Natural killer cell (primary cell): ENCODE measurements at regions of chr4 and their contacts with region 1.

Region 1: DNA sequence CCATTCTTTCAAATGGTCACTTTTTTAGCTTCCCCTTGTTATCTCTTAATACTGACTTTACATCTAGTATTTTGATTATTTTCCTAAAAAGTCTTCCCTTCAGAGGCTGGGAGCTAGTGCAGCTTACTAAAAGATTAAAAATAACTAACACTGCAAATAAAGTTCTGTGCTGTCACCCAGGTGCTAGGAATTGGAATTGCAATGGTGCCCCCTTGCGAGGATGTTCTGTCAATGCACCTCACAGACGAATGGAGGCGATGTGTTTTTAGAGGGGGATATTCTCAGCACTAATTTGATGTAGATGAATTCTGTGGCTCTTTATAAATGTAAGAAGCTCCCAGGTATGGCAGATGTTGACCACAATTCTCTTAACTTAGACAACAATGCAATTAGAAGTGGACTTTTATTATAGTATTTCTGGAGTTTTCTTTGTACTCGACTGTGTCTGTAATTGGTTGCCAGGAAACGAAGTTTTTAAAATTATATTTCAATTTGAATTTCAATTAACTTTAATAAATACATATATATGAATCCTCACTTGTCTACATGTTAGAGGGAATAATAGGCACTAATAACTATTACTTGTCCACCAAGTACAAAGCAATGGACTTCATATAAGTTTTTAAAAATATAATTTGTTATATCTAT is 22.0 kb upstream of the SMIM31 start:
- DNase-seq: peak; percentile 43 to 68
- ATAC-seq: peak; percentile 65 to 75 (median 73)
- H3K4me3 ChIP-seq: no peak overlapping the region
- H3K4me3 Mint-ChIP-seq: no peak overlapping the region
- H3K27ac ChIP-seq: no peak overlapping the region
- H3K27ac Mint-ChIP-seq: no peak overlapping the region
- H3K4me1 ChIP-seq: no peaks in the 10 kb centered on the region
- H3K4me1 Mint-ChIP-seq: peaks cover 8 to 40% of the 10 kb centered on the region in 2 donors
- H3K27me3 ChIP-seq: no peaks in the 10 kb centered on the region
- H3K27me3 Mint-ChIP-seq: peaks cover 0 to 5% of the 10 kb centered on the region in 2 donors
- CTCF ChIP-seq: peak; percentile 95

Region 2: GRCh38 chr4:164716901-164717300 is 15.1 kb before region 1 on chr4:
- intact Hi-C with region 1: loop called (anchors 1 kb)
- DNase-seq: peak in 1 of 2 donors; percentile 3
- ATAC-seq: peak; percentile 57 to 81 (median 69)
- H3K4me3 ChIP-seq: no peak overlapping the region
- H3K4me3 Mint-ChIP-seq: no peak overlapping the region
- H3K27ac ChIP-seq: no peak overlapping the region
- H3K27ac Mint-ChIP-seq: no peak overlapping the region
- H3K4me1 ChIP-seq: no peaks in the 10 kb centered on the region
- H3K4me1 Mint-ChIP-seq: peaks cover 0 to 4% of the 10 kb centered on the region in 2 donors
- H3K27me3 ChIP-seq: no peaks in the 10 kb centered on the region
- H3K27me3 Mint-ChIP-seq: peaks cover 2 to 31% of the 10 kb centered on the region in 2 donors
- CTCF ChIP-seq: no peak